CD8-positive, alpha-beta memory T cell (primary cell): ENCODE measurements at regions of chr10 and their contacts with region 1.

Region 1: DNA sequence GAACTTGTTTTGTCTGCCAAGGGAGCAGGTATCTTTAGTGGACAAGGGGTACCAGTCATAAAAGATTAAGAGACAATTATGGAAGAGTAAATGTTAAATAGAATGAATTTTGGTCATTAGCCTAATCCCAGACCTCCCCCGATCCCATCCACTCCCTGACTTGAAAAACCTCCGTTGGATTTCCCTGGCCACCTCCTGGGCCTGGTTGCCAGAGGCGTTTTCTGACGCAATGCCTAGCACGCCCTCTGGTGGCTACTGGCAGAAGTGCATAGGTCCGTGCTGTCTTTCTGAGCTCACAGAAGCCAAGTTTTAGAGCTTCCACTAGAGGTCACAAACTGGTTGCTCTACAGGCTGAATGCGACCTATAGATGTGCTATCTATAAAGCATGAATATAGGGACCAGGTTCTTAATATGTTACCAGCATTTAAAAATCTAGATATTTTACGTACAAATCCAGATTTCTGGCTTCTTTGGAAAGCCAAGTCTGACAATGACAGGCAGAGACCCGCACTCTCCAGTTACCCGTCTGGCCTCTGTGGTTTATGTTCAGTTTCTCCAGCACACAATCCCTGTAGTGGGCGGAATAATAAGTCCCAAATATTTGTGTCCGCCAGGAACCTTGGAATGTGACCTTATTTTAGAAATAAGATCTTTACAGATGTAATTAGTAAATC is 39.8 kb downstream of the SPOCK2 start:
- DNase-seq: peak; percentile 73 to 90 (median 82)
- H3K4me3 ChIP-seq: no peak overlapping the region
- H3K4me3 Mint-ChIP-seq: no peak overlapping the region
- H3K27ac ChIP-seq: no peak overlapping the region
- H3K27ac Mint-ChIP-seq: peak overlapping the region in 4 of 8 donors; percentile 44 to 84 (median 70)
- H3K4me1 ChIP-seq: no peaks in the 10 kb centered on the region
- H3K4me1 Mint-ChIP-seq: peaks cover 6 to 8% (median 7%) of the 10 kb centered on the region in 3 donors
- H3K27me3 ChIP-seq: no peaks in the 10 kb centered on the region
- H3K27me3 Mint-ChIP-seq: peaks cover 0 to 2% of the 10 kb centered on the region in 2 donors

Region 2: DNA sequence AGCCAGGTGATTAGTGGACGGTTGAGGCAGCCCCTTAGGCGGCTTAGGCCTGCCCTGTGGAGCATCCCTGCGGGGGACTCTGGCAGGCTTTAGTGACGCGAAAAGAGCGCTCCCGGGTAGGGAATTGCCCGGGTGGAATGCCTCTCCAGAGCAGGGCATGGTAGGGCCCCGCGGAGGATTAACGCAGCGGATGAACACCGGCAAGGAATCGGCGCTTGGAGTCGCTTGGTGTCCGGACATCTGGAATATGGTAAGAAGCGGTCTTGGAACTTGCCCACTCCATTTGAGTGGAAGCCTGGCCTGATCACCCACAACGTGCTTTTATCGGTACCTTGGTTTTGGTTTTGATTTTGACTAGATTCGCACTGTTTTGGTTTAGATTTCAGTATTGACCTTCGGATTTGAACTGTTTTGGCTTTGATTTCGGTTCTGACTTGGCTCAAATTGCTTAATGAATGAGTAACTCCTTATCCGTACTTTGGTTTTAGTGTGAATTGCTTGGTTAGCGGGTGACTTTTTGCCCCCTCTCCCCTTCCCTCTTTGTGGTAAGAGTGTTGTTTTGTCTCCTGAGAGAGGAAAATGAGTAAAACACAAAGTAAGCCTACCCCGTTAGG is 108.6 kb before region 1 on chr10:
- CTCF ChIA-PET with region 1: no interaction called
- POLR2A ChIA-PET with region 1: no interaction called
- DNase-seq: no peak
- H3K4me3 ChIP-seq: no peak overlapping the region
- H3K4me3 Mint-ChIP-seq: peak overlapping the region in 3 of 7 donors; percentile 24 to 56 (median 36)
- H3K27ac ChIP-seq: no peak overlapping the region
- H3K27ac Mint-ChIP-seq: no peak overlapping the region
- H3K4me1 ChIP-seq: peaks cover 1% of the 10 kb centered on the region
- H3K4me1 Mint-ChIP-seq: peaks cover 4 to 14% (median 6%) of the 10 kb centered on the region in 3 donors
- H3K27me3 ChIP-seq: no peaks in the 10 kb centered on the region
- H3K27me3 Mint-ChIP-seq: peaks cover 19 to 34% of the 10 kb centered on the region in 2 donors

Region 3: DNA sequence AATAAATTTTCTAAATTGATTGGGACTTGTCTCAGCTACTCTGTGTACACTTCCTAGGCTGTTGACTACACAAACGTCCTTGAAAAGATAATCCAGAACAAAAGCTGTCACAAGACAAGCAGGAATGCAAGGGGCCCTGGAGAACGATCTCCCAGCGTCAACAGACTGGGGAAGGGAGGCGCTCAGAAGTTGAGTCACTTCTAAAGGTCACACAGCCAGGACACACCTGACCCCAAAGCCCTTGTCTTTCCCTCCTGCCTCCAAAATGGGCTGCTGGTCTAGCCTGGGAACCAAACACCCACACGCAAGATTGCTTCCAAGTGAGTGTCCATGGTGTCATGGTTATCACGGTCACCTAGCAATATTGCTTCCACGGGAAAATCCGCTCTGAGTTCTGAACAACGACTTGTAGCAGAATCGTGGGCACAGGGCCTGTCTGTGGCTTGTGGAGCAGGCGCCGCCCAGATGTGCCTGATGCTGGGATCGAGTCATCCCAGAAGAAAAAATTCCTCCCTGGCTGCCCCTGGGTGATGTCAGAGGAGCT is 10.1 kb before region 1 on chr10:
- CTCF ChIA-PET with region 1: interaction called, 12 read pairs
- POLR2A ChIA-PET with region 1: no interaction called
- DNase-seq: no peak
- H3K4me3 ChIP-seq: no peak overlapping the region
- H3K4me3 Mint-ChIP-seq: no peak overlapping the region
- H3K27ac ChIP-seq: no peak overlapping the region
- H3K27ac Mint-ChIP-seq: no peak overlapping the region
- H3K4me1 ChIP-seq: no peaks in the 10 kb centered on the region
- H3K4me1 Mint-ChIP-seq: no peaks in the 10 kb centered on the region
- H3K27me3 ChIP-seq: no peaks in the 10 kb centered on the region
- H3K27me3 Mint-ChIP-seq: peaks cover 0 to 4% of the 10 kb centered on the region in 2 donors

Region 4: DNA sequence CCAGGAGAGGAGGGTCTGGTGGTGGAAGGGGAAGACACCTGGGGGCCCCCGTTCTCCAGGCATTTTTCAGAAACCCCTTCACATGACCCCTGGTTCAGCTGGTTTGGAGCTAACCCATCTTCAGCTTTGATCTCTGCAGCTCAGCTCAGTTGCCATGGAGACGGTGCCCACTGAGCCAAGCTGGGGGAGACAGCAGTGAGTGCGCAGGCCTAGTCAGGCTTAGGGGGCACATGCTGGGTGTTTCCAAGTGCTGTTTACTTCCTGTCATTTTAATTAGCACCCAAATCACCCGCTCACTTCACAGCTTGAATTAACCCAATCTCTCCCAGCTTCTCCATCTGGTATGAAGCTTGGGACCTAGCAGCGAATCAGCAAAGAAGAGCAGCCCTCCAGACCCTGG is 30.8 kb after region 1 on chr10:
- CTCF ChIA-PET with region 1: interaction called, 17 read pairs
- POLR2A ChIA-PET with region 1: interaction called, 6 read pairs
- DNase-seq: peak; percentile 66 to 93 (median 85)
- H3K4me3 ChIP-seq: peak overlapping the region; percentile 36
- H3K4me3 Mint-ChIP-seq: peak overlapping the region; percentile 86 to 93 (median 90)
- H3K27ac ChIP-seq: peak overlapping the region; percentile 19
- H3K27ac Mint-ChIP-seq: peak overlapping the region; percentile 77 to 98 (median 94)
- H3K4me1 ChIP-seq: peaks cover 95% of the 10 kb centered on the region
- H3K4me1 Mint-ChIP-seq: peaks cover 86 to 97% (median 96%) of the 10 kb centered on the region in 3 donors
- H3K27me3 ChIP-seq: no peaks in the 10 kb centered on the region
- H3K27me3 Mint-ChIP-seq: peaks cover 0 to 7% of the 10 kb centered on the region in 2 donors

Region 5: GRCh38 chr10:72223743-72224101 is 175.1 kb after region 1 on chr10:
- CTCF ChIA-PET with region 1: interaction called, 10 read pairs
- POLR2A ChIA-PET with region 1: no interaction called
- DNase-seq: no peak
- H3K4me3 ChIP-seq: no peak overlapping the region
- H3K4me3 Mint-ChIP-seq: peak overlapping the region in 2 of 7 donors; percentile 9 to 40
- H3K27ac ChIP-seq: no peak overlapping the region
- H3K27ac Mint-ChIP-seq: peak overlapping the region in 7 of 8 donors; percentile 18 to 76 (median 38)
- H3K4me1 ChIP-seq: peaks cover 54% of the 10 kb centered on the region
- H3K4me1 Mint-ChIP-seq: peaks cover 42 to 61% (median 47%) of the 10 kb centered on the region in 3 donors
- H3K27me3 ChIP-seq: no peaks in the 10 kb centered on the region
- H3K27me3 Mint-ChIP-seq: no peaks in the 10 kb centered on the region

Region 6: DNA sequence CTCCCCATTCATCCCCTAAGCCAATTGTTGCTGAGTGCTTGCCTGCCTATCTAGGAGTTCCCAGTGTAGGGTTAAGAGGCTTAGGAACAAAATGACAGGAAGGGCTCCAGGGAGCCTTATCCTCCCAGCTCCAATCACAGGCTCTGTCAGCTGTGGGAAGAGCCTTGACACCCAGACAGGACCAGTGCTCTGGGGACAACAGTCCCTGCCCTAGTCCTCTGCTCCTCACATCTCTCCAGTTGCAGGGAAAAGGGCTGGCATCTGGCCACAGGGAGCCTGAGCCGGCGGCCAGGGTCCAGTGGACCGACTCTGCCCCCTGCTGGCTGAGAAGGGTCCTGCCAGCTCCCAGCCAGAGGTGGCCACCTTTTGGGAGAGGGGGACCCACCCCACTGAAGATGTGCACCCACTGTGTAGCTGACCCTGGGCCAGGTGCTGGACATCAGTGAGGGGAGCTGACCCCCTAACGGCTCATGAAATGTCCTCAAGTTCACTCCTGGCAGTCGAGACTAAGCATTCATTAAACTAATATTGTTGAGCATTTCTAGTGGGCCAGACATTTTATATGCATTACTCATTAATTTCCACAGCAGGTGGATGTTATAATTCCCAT is 288.5 kb after region 1 on chr10:
- CTCF ChIA-PET with region 1: interaction called, 14 read pairs
- POLR2A ChIA-PET with region 1: interaction called, 4 read pairs
- DNase-seq: peak; percentile 41 to 71 (median 57)
- H3K4me3 ChIP-seq: no peak overlapping the region
- H3K4me3 Mint-ChIP-seq: peak overlapping the region in 3 of 7 donors; percentile 28 to 50 (median 32)
- H3K27ac ChIP-seq: no peak overlapping the region
- H3K27ac Mint-ChIP-seq: peak overlapping the region in 7 of 8 donors; percentile 50 to 98 (median 92)
- H3K4me1 ChIP-seq: peaks cover 57% of the 10 kb centered on the region
- H3K4me1 Mint-ChIP-seq: peaks cover 54 to 70% (median 55%) of the 10 kb centered on the region in 3 donors
- H3K27me3 ChIP-seq: no peaks in the 10 kb centered on the region
- H3K27me3 Mint-ChIP-seq: no peaks in the 10 kb centered on the region